Activated T-helper 1 cell treated with anti-CD3 and anti-CD28 coated beads, Interleukin-12 subunit alpha, Interleukin-12 subunit beta, Interleukin-2, Interleukin-4 antibody, amounts not matched to agents 30 ng/mL and 10 ng/mL and 1 ng/mL, durations not matched to agents 14 hours and 24 hours and 36 hours (primary cell): ENCODE measurements at regions of chr4 and their contacts with region 1.

Region 1: GRCh38 chr4:4867375-4868039 is 8.0 kb downstream of the MSX1 start:
- DNase-seq: no peak
- H3K4me3 Mint-ChIP-seq: no peak overlapping the region
- H3K27ac Mint-ChIP-seq: no peak overlapping the region
- H3K4me1 Mint-ChIP-seq: peaks cover 5% of the 10 kb centered on the region
- H3K27me3 Mint-ChIP-seq: peaks cover 69% of the 10 kb centered on the region

Region 2: GRCh38 chr4:3342182-3342854 is 1525.2 kb before region 1 on chr4:
- intact Hi-C with region 1: no loop called
- DNase-seq: no peak
- H3K4me3 Mint-ChIP-seq: no peak overlapping the region
- H3K27ac Mint-ChIP-seq: no peak overlapping the region
- H3K4me1 Mint-ChIP-seq: peaks cover 4% of the 10 kb centered on the region
- H3K27me3 Mint-ChIP-seq: peaks cover 5% of the 10 kb centered on the region

Region 3: GRCh38 chr4:4852591-4853375 is 14.7 kb before region 1 on chr4:
- intact Hi-C with region 1: loop called (anchors 1 kb)
- DNase-seq: no peak
- H3K4me3 Mint-ChIP-seq: peak overlapping the region; percentile 77
- H3K27ac Mint-ChIP-seq: peak overlapping the region; percentile 31
- H3K4me1 Mint-ChIP-seq: peaks cover 11% of the 10 kb centered on the region
- H3K27me3 Mint-ChIP-seq: peaks cover 46% of the 10 kb centered on the region

Region 4: GRCh38 chr4:5050520-5051277 is 183.2 kb after region 1 on chr4:
- intact Hi-C with region 1: loop called (anchors 5 kb)
- DNase-seq: no peak
- H3K4me3 Mint-ChIP-seq: peak overlapping the region; percentile 46
- H3K27ac Mint-ChIP-seq: no peak overlapping the region
- H3K4me1 Mint-ChIP-seq: peaks cover 9% of the 10 kb centered on the region
- H3K27me3 Mint-ChIP-seq: peaks cover 35% of the 10 kb centered on the region